Mammary epithelial cell (primary cell): ENCODE measurements at regions of chr5 and their contacts with region 1.

Region 1: DNA sequence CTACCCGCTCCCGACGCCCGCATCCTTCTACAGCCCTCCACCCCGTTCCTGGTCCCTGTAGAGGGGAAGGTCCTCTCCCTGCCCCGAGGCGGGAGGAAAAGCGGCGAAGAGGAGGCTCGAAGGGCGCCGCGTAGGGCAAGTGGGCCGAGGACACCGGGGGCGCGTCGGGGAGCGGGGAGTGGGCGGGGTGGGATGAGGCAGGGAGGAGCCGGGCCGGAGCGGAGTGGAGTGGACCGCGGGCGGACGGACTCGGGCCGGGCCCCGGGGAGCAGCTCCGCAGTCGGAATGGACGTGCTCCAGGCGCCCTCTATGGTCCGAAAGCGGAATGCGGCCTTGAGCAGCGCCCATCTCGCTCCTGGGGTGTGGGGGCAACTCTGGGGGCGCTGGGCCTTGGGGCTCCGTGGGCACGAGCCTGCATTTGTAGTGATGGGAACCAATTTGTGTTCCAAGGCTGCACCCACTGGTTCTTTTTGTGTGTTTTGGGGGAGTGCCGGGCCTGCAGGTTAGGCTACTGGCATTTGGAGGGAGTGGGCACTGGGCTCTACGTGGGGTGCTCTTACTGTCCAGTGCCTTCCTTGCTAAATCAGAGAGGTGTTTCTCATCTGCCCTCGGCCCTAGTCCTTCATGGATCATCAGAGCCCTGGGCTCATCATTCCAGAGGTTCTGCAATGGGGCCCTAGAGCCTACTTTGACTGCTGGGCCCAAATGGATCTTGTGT is 7.3 kb downstream of the IRX1 start:
- DNase-seq: peak; percentile 59
- H3K4me3 ChIP-seq: peak overlapping the region; percentile 82 to 100 (median 97)
- H3K27ac ChIP-seq: peak overlapping the region; percentile 96
- H3K4me1 ChIP-seq: peaks cover 62% of the 10 kb centered on the region
- H3K27me3 ChIP-seq: no peaks in the 10 kb centered on the region
- CTCF ChIP-seq: peak; percentile 45 to 76

Region 2: DNA sequence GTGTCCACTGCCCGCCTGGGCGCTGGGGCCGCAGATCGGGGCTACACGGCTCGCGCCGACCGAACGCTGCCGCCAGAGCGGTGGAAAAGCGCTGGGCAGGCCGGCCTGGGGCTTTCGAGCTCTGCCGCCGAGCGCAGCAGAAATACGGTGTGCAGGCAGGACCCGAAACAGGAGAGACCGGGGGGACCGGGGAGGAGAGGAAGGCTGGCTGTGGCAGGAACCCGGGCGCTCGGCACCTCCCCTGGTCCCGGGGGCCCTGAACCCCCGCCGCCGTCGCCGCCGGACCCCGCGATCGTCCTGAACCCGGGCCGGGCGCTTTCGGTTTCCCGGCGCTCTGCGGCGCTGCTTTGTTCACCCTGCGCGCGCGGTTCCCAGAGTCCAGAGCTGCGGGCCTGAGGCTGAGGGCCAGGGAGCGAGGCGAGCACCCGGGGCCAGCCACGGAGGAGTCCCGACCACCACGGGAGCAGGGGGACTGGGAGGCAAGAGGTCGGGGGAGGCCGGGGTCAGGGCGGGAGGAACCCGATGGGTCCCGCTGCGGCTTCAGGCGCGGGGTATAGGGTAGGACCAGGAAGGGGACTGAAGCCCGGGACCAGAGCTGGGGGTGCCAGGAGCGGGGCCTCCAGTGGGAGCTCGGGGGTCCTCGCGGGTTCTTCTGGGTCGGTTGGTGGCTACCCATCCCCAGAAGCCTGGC is 863.4 kb before region 1 on chr5:
- CTCF ChIA-PET with region 1: no interaction called
- dilution Hi-C with region 1: loop called (anchors 5 kb)
- in situ Hi-C with region 1: no loop called
- intact Hi-C with region 1: no loop called
- DNase-seq: peak; percentile 68
- H3K4me3 ChIP-seq: peak overlapping the region; percentile 58 to 64 (median 64)
- H3K27ac ChIP-seq: peak overlapping the region; percentile 49
- H3K4me1 ChIP-seq: peaks cover 30% of the 10 kb centered on the region
- H3K27me3 ChIP-seq: no peaks in the 10 kb centered on the region
- CTCF ChIP-seq: no peak

Region 3: DNA sequence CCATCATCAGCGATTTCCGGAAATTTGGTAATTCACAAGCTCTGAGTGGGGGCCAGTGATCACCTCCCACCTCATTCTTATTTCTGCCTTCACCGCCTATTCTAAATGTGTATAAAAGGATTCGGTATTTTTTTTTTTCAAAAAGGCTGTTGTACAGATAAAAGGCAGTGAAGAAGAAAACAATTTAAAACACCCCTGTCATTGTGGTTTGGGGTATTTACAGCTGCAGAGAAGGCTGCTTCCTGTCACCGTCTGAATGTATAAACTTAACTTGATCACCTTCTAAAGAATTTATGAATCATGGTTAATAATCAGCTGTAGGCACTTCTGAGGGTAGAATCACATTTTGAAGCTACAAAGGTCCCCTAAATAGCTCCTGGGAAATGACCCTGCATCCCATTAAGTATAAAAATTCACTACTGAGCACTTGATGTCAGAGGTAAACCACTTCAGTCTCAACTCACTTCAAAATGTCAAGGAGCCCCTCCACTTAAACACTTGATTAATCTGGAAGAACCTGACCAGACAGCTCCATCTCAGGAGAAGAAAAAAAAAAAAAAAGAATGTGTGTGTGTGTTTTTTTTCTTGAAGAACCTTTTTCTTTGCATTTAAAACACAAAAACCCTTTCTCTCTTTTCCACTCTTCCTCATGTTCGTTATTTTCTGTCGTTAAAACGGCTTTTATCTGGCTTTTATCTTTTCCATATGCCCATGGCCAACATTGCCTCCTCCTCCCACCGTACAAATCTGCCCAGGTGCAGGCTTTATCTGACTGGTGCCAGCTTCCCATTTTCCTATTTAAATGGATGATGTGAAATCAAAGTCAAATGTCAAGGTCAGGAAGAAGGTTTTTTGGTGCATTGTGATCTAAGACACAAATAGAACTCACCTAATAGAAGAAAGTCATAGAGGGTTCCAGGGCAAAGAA is 283.8 kb after region 1 on chr5:
- CTCF ChIA-PET with region 1: interaction called, 18 read pairs
- dilution Hi-C with region 1: no loop called
- in situ Hi-C with region 1: no loop called
- intact Hi-C with region 1: loop called (anchors 10 kb)
- DNase-seq: peak; percentile 24
- H3K4me3 ChIP-seq: no peak overlapping the region
- H3K27ac ChIP-seq: no peak overlapping the region
- H3K4me1 ChIP-seq: peaks cover 13% of the 10 kb centered on the region
- H3K27me3 ChIP-seq: no peaks in the 10 kb centered on the region
- CTCF ChIP-seq: no peak

Region 4: DNA sequence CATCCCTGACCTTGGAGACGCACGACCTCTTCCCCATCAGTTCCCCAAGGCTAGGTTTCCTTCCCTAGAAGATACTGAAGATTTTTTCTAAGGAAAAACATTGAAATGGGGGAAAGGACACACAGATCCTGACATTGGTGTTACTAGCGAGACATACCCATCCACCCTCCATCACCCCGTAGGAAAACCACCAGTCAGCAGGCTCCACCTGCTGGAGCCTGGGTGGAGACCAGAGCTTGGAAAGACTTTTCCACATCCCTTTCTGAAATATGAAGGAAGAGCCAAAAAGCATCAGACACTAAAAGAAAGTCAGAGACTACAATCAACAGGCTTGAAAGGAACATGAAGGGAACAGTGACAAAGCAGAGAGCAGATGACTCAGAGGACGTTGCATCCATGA is 630.7 kb after region 1 on chr5:
- CTCF ChIA-PET with region 1: no interaction called
- dilution Hi-C with region 1: no loop called
- in situ Hi-C with region 1: no loop called
- intact Hi-C with region 1: loop called (anchors 1 kb)
- DNase-seq: no peak
- H3K4me3 ChIP-seq: no peak overlapping the region
- H3K27ac ChIP-seq: no peak overlapping the region
- H3K4me1 ChIP-seq: no peaks in the 10 kb centered on the region
- H3K27me3 ChIP-seq: no peaks in the 10 kb centered on the region
- CTCF ChIP-seq: peak in 1 of 2 donors; percentile 43

Region 5: DNA sequence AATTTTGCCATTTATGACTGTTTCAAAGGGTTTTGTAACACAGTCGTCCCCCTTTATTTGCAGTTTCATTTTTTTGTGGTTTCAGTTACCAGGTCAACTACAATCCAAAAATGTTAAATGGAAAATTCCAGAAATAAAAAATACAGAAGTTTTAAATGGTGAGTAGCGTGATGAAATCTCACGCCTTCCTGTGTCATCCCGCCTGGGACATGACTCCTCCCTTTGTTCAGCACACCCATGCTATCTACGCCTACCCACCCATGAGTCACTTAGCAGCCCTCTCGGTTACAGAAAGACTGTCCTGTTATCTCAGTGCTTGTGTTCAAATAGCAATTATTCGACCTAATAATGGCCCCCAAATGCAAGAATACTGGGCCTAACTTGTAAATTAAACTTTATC is 771.9 kb after region 1 on chr5:
- CTCF ChIA-PET with region 1: no interaction called
- dilution Hi-C with region 1: loop called (anchors 25 kb)
- in situ Hi-C with region 1: no loop called
- intact Hi-C with region 1: no loop called
- DNase-seq: peak; percentile 88
- H3K4me3 ChIP-seq: no peak overlapping the region
- H3K27ac ChIP-seq: peak overlapping the region; percentile 77
- H3K4me1 ChIP-seq: peaks cover 57% of the 10 kb centered on the region
- H3K27me3 ChIP-seq: no peaks in the 10 kb centered on the region
- CTCF ChIP-seq: no peak

Region 6: DNA sequence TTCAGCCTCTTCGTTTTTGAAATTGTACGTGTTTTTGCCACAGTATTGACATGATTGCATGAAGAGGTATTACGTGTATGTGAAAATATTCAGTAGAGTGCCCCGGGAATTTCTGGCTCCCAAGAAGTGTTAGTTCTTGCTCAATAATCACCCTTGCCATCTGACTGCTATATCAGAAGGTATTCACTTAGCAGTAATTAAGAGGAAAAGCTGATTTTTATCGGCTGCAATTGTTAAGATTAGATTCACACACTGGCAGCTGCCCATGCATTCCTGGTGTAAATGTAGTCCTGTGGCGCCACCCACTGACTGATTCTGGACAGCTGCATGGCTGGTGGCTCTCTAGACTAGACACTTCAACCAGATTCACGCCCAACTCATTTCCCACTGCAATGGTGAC is 1097.1 kb after region 1 on chr5:
- CTCF ChIA-PET with region 1: no interaction called
- dilution Hi-C with region 1: no loop called
- in situ Hi-C with region 1: no loop called
- intact Hi-C with region 1: loop called (anchors 2 kb)
- DNase-seq: peak; percentile 64
- H3K4me3 ChIP-seq: no peak overlapping the region
- H3K27ac ChIP-seq: no peak overlapping the region
- H3K4me1 ChIP-seq: no peaks in the 10 kb centered on the region
- H3K27me3 ChIP-seq: no peaks in the 10 kb centered on the region
- CTCF ChIP-seq: peak; percentile 79 to 88